Activated CD8-positive, alpha-beta T cell treated with anti-CD3 and anti-CD28 coated beads, Interleukin-2, amount 10 ng/mL, durations not matched to agents 7 days and 5 days (primary cell): ENCODE measurements at regions of chr15 and their contacts with region 1.

Region 1: GRCh38 chr15:71730277-71731144 is 79.8 kb upstream of the NR2E3 start:
- DNase-seq: peak; percentile 48
- ATAC-seq: peak; percentile 44
- H3K4me3 Mint-ChIP-seq: no peak overlapping the region
- H3K27ac Mint-ChIP-seq: no peak overlapping the region
- H3K4me1 Mint-ChIP-seq: no peaks in the 10 kb centered on the region
- H3K27me3 Mint-ChIP-seq: no peaks in the 10 kb centered on the region

Region 2: GRCh38 chr15:71743861-71744382 is 13.4 kb after region 1 on chr15:
- CTCF ChIA-PET with region 1: interaction called, 13 read pairs
- POLR2A ChIA-PET with region 1: no interaction called
- DNase-seq: peak; percentile 71
- ATAC-seq: no peak
- H3K4me3 Mint-ChIP-seq: no peak overlapping the region
- H3K27ac Mint-ChIP-seq: no peak overlapping the region
- H3K4me1 Mint-ChIP-seq: no peaks in the 10 kb centered on the region
- H3K27me3 Mint-ChIP-seq: peaks cover 4% of the 10 kb centered on the region

Region 3: GRCh38 chr15:71792521-71792920 is 62.0 kb after region 1 on chr15:
- CTCF ChIA-PET with region 1: no interaction called
- POLR2A ChIA-PET with region 1: no interaction called
- DNase-seq: no peak
- ATAC-seq: no peak
- H3K4me3 Mint-ChIP-seq: no peak overlapping the region
- H3K27ac Mint-ChIP-seq: no peak overlapping the region
- H3K4me1 Mint-ChIP-seq: no peaks in the 10 kb centered on the region
- H3K27me3 Mint-ChIP-seq: no peaks in the 10 kb centered on the region